CD4-positive, alpha-beta T cell (primary cell): ENCODE measurements at regions of chr15 and their contacts with region 1.

Region 1: DNA sequence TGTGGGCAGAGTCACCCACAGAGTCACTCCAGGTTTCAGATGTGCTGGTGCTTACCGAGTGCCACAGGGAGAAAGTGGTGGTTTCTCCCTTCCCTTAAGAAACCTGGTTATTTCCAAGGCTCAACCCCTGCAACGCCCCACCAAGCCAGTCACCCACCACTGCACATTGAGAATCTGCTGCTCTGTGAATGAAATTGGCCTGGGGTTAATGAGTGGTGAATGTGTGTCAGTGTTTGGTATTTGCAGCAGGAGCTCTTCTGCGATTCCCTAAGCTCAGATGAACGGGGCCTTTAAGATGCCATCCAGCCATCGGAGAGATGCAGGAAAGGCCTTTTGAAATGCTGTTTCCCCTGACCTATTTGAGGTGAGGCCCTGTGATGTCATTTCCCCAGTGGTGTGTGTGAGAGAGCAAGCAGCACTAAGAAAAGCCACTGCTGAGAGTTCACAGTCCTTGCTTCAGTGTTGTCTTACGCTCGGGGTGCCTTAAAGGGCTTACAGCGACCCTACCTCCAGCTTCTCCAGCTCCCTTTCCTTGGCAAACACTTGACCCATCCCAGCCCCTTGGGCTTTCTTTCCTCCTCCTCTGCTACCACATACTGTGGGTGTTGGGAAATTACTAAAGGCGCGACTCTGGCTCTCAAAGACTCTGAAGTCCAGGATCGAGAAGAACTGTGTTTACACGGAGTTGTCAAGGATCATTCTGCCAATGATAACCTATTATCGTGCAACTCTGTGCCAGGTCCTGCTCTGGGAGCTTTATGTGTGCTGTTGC is 68.9 kb downstream of the SMAD3 start:
- DNase-seq: peak; percentile 50 to 91 (median 58)
- ATAC-seq: peak; percentile 97
- H3K4me3 ChIP-seq: peak overlapping the region; percentile 37
- H3K4me3 Mint-ChIP-seq: peak overlapping the region; percentile 79
- H3K27ac ChIP-seq: peak overlapping the region; percentile 81 to 91
- H3K27ac Mint-ChIP-seq: peak overlapping the region; percentile 96
- H3K4me1 ChIP-seq: peaks cover 92% of the 10 kb centered on the region
- H3K4me1 Mint-ChIP-seq: peaks cover 91% of the 10 kb centered on the region
- H3K27me3 ChIP-seq: no peaks in the 10 kb centered on the region
- H3K27me3 Mint-ChIP-seq: no peaks in the 10 kb centered on the region
- CTCF ChIP-seq: no peak

Region 2: DNA sequence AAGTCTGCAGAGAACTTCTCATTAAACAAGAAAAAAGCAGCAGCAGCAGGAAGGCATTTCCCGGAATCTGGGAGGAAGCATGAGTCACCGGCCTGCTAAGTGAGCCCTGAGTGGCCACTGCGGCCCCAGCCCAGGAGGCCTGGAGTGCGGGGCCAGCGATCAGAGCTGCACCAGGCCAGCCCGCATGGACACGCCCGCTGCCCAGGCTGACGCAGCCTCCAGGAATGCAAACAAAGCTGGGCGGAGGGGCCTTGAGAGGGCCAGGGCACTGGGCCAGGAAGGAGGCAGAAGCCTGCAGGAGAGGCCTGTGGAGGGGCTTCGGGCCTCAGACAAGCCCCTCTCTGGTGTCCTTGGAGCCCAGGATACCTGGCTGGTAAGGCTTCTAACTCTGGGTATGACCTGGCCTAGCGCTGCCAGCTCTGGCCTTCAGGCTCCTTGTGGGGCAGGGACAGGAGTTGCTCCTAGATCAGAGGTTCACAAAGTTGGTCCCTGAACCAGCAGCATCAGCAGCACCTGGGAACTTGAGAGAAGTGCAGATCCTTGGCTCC is 331.0 kb before region 1 on chr15:
- CTCF ChIA-PET with region 1: no interaction called
- POLR2A ChIA-PET with region 1: no interaction called
- intact Hi-C with region 1: no loop called
- DNase-seq: peak in 2 of 14 experiments; percentile 15 to 36
- ATAC-seq: no peak
- H3K4me3 ChIP-seq: no peak overlapping the region
- H3K4me3 Mint-ChIP-seq: no peak overlapping the region
- H3K27ac ChIP-seq: no peak overlapping the region
- H3K27ac Mint-ChIP-seq: no peak overlapping the region
- H3K4me1 ChIP-seq: no peaks in the 10 kb centered on the region
- H3K4me1 Mint-ChIP-seq: no peaks in the 10 kb centered on the region
- H3K27me3 ChIP-seq: peaks cover 0 to 5% of the 10 kb centered on the region in 2 experiments
- H3K27me3 Mint-ChIP-seq: no peaks in the 10 kb centered on the region
- CTCF ChIP-seq: no peak

Region 3: GRCh38 chr15:67080900-67081431 is 53.3 kb before region 1 on chr15:
- CTCF ChIA-PET with region 1: interaction called, 4 read pairs
- POLR2A ChIA-PET with region 1: interaction called, 4 read pairs
- intact Hi-C with region 1: loop called in 1 of 2 experiments (anchors 5 kb)
- DNase-seq: peak in 6 of 14 experiments; percentile 23 to 83 (median 66)
- ATAC-seq: peak; percentile 45
- H3K4me3 ChIP-seq: no peak overlapping the region
- H3K4me3 Mint-ChIP-seq: peak overlapping the region; percentile 32
- H3K27ac ChIP-seq: peak overlapping the region; percentile 45 to 72
- H3K27ac Mint-ChIP-seq: peak overlapping the region; percentile 89
- H3K4me1 ChIP-seq: peaks cover 98% of the 10 kb centered on the region
- H3K4me1 Mint-ChIP-seq: peaks cover 96% of the 10 kb centered on the region
- H3K27me3 ChIP-seq: no peaks in the 10 kb centered on the region
- H3K27me3 Mint-ChIP-seq: no peaks in the 10 kb centered on the region
- CTCF ChIP-seq: no peak

Region 4: DNA sequence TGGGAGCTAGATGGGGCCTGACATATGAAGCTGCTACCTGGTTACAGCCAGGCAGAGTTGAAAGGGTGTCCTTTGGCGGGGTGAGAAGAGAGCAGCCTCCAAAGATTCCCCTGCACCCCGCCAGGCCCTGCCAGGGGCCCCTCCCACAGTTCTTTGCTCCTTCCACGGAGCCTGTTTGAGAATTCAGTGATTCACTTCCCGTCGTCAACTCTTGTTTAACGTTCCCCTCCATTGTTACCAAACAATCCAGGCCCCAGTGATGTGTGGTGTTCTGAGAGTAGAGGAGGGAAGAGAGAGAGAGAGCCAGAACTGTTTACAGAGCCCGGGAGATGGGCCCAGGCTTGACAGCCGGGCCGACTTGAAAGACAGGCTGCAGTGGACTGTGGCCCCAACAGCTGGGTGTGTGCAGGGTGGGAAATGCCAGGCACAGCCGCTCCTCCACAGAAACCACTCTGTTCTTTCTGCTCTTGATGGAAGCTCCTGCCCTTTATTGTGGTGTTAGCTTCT is 12.7 kb after region 1 on chr15:
- CTCF ChIA-PET with region 1: interaction called, 3 read pairs
- POLR2A ChIA-PET with region 1: interaction called, 19 read pairs
- intact Hi-C with region 1: no loop called
- DNase-seq: peak in 9 of 14 experiments; percentile 11 to 73 (median 46)
- ATAC-seq: peak; percentile 75
- H3K4me3 ChIP-seq: no peak overlapping the region
- H3K4me3 Mint-ChIP-seq: peak overlapping the region; percentile 52
- H3K27ac ChIP-seq: peak overlapping the region; percentile 5 to 13
- H3K27ac Mint-ChIP-seq: peak overlapping the region; percentile 88
- H3K4me1 ChIP-seq: peaks cover 86% of the 10 kb centered on the region
- H3K4me1 Mint-ChIP-seq: peaks cover 85% of the 10 kb centered on the region
- H3K27me3 ChIP-seq: no peaks in the 10 kb centered on the region
- H3K27me3 Mint-ChIP-seq: no peaks in the 10 kb centered on the region
- CTCF ChIP-seq: no peak

Region 5: GRCh38 chr15:67303490-67304363 is 169.5 kb after region 1 on chr15:
- CTCF ChIA-PET with region 1: no interaction called
- POLR2A ChIA-PET with region 1: no interaction called
- intact Hi-C with region 1: no loop called
- DNase-seq: peak in 10 of 14 experiments; percentile 0 to 74 (median 12)
- ATAC-seq: peak; percentile 59
- H3K4me3 ChIP-seq: no peak overlapping the region
- H3K4me3 Mint-ChIP-seq: no peak overlapping the region
- H3K27ac ChIP-seq: no peak overlapping the region
- H3K27ac Mint-ChIP-seq: no peak overlapping the region
- H3K4me1 ChIP-seq: no peaks in the 10 kb centered on the region
- H3K4me1 Mint-ChIP-seq: no peaks in the 10 kb centered on the region
- H3K27me3 ChIP-seq: no peaks in the 10 kb centered on the region
- H3K27me3 Mint-ChIP-seq: no peaks in the 10 kb centered on the region
- CTCF ChIP-seq: peak; percentile 79